Astrocyte of the spinal cord (primary cell): ENCODE measurements at regions of chr5 and their contacts with region 1.

Region 1: DNA sequence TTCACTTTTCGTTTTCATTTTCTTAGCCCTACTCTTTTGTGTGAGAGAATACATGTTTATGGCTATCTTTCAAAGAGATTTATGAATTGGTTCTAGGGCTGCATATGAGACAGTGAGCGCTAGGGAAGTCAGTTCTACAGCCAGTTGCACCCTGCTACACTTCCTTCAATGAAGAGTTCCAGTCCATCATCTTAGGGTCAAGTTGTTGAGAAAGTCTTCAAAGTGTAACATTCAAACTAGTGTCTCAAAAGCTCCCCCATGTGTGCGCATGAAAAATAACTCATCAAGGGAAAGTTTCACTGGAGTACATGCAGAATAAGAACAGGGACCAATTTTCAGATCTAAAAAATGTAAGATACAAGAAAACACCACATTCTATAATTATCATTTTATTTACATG is 317.2 kb downstream of the DEPDC1B start:
- DNase-seq: peak; percentile 52
- H3K4me3 ChIP-seq: no peak overlapping the region
- CTCF ChIP-seq: peak; percentile 53

Region 2: GRCh38 chr5:59810041-59810440 is 572.7 kb before region 1 on chr5:
- in situ Hi-C with region 1: loop called (anchors 25 kb)
- DNase-seq: peak; percentile 74
- H3K4me3 ChIP-seq: no peak overlapping the region
- CTCF ChIP-seq: peak; percentile 91

Region 3: GRCh38 chr5:60916646-60917045 is 533.9 kb after region 1 on chr5:
- in situ Hi-C with region 1: no loop called
- DNase-seq: no peak
- H3K4me3 ChIP-seq: no peak overlapping the region
- CTCF ChIP-seq: no peak